Dendritic cell treated with granulocyte-macrophage colony-stimulating factor and Interleukin-4, amounts not matched to agents 40 ng/mL and 50 ng/mL, for 4 days (primary cell): ENCODE measurements at regions of chr16 and their contacts with region 1.

Region 1: GRCh38 chr16:55543472-55543871 is 23.0 kb upstream of the CAPNS2 start:
- H3K4me3 Mint-ChIP-seq: no peak overlapping the region
- H3K27ac Mint-ChIP-seq: no peak overlapping the region
- H3K4me1 Mint-ChIP-seq: peaks cover 9% of the 10 kb centered on the region
- H3K27me3 Mint-ChIP-seq: no peaks in the 10 kb centered on the region

Region 2: GRCh38 chr16:55701442-55702319 is 158.2 kb after region 1 on chr16:
- intact Hi-C with region 1: loop called (anchors 5 kb)
- H3K4me3 Mint-ChIP-seq: no peak overlapping the region
- H3K27ac Mint-ChIP-seq: no peak overlapping the region
- H3K4me1 Mint-ChIP-seq: no peaks in the 10 kb centered on the region
- H3K27me3 Mint-ChIP-seq: peaks cover 12% of the 10 kb centered on the region